Body of pancreas (tissue), 4 donors: ENCODE measurements at regions of chr20 and their contacts with region 1.

Region 1: DNA sequence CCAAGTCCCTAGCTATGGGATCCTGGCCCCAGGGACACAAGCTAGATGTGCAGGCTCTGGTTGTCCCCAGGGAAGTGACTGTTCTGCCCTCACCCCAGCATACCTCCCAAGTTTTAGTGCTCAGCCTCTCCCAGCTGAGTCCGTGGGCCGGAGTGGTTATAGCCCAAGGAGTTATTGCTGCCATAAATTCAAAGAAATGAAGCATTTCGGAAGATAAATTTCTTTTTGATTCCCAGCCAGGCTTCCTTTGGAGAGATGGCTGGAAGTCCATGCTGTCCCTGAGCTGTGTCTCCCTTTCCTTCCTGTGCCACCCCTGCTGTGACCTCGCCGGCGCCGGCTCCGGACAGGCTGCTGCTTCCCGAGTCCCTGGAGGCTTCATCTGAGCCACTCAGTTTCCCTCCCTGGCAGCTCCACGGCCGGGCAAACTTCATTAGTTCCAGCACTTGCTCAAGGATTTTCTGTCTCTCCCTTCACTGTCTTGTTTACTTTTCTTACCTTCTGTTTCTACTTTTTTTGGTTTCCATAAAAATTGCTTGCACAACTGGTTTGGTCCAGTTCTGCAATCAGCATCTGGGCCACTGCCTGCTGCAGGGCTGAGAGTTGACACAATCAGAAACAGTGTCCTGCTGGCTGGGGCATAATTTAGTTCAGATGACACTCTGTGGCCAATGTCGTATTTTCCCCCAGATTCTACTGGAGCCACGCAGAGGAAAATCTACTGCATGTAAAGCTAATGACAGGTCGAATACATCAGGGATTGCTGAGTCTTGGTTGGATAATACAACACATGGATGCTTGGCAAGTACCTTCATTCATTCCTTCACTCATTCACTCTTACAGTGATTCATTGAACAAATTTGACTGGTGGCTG is 225.5 kb downstream of the SYNDIG1 start:
- DNase-seq: no peak
- ATAC-seq: no peak
- H3K4me3 ChIP-seq: no peak overlapping the region
- H3K27ac ChIP-seq: no peak overlapping the region
- H3K4me1 ChIP-seq: no peaks in the 10 kb centered on the region
- H3K27me3 ChIP-seq: no peaks in the 10 kb centered on the region
- CTCF ChIP-seq: no peak
- POLR2A ChIP-seq: no peak

Region 2: GRCh38 chr20:24634855-24635254 is 60.1 kb before region 1 on chr20:
- intact Hi-C with region 1: loop called (anchors 10 kb)
- DNase-seq: peak in 1 of 4 donors; percentile 11
- ATAC-seq: peak; percentile 18
- H3K4me3 ChIP-seq: no peak overlapping the region
- H3K27ac ChIP-seq: no peak overlapping the region
- H3K4me1 ChIP-seq: no peaks in the 10 kb centered on the region
- H3K27me3 ChIP-seq: no peaks in the 10 kb centered on the region
- CTCF ChIP-seq: no peak
- POLR2A ChIP-seq: no peak

Region 3: DNA sequence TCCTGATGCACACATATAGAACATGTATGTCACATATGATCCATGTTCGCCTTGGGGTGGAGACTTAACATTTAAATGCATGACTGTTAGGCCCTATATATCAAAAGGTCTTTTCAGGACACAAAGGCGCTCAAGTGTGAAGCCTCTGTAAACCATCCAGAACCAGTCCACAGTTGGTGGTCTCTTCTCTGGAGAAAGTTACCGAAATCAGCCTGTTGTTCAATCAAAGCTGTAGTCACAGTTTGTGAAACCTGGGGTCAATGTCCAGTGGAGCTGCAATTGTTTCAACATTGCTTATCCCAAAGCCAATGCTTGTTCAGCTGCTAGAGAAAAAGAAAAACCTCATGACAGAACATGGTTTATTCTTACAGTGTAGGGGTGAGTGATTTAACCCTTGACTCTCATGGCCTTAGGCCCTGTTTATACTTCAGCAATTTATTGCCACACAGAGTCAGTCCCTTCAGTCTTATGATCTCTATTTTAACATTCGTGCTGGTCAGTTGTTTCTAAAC is 60.5 kb after region 1 on chr20:
- intact Hi-C with region 1: loop called (anchors 10 kb)
- DNase-seq: peak in 3 of 4 donors; percentile 40 to 61 (median 53)
- ATAC-seq: peak; percentile 89
- H3K4me3 ChIP-seq: no peak overlapping the region
- H3K27ac ChIP-seq: peak overlapping the region in 3 of 4 donors; percentile 46 to 72 (median 52)
- H3K4me1 ChIP-seq: peaks cover 39% of the 10 kb centered on the region
- H3K27me3 ChIP-seq: no peaks in the 10 kb centered on the region
- CTCF ChIP-seq: no peak
- POLR2A ChIP-seq: no peak